ENCODE measurements at regions of chr7 and their contacts with region 1.

Region 1: GRCh38 chr7:133434055-133434865 is 181.4 kb downstream of the EXOC4 start:
- DNase-seq: no peak
- ATAC-seq: 0 out of 2 replicates have a peak, but pooled peaks have one; percentile 28
- H3K4me3 Mint-ChIP-seq: no peak overlapping the region
- H3K27ac Mint-ChIP-seq: no peak overlapping the region
- H3K4me1 Mint-ChIP-seq: peaks cover 32% of the 10 kb centered on the region
- H3K27me3 Mint-ChIP-seq: no peaks in the 10 kb centered on the region
- CTCF ChIP-seq: 0 out of 2 replicates have a peak, but pooled peaks have one; percentile 17

Region 2: GRCh38 chr7:133252858-133253518 is 181.3 kb before region 1 on chr7 and contains the start of gene EXOC4:
- CTCF ChIA-PET with region 1: interaction called, 11 read pairs
- POLR2A ChIA-PET with region 1: no interaction called
- DNase-seq: peak; percentile 87
- ATAC-seq: peak; percentile 100
- H3K4me3 Mint-ChIP-seq: peak within 1 kb of the TSS; percentile 94
- H3K27ac Mint-ChIP-seq: peak within 1 kb of the TSS; percentile 84
- H3K4me1 Mint-ChIP-seq: peaks cover 15% of the 10 kb centered on the region
- H3K27me3 Mint-ChIP-seq: no peaks in the 10 kb centered on the region
- CTCF ChIP-seq: no peak
- total RNA-seq, gene EXOC4: 62.0 to 72.4 TPM (median 66.8 TPM) in 3 replicates

Region 3: DNA sequence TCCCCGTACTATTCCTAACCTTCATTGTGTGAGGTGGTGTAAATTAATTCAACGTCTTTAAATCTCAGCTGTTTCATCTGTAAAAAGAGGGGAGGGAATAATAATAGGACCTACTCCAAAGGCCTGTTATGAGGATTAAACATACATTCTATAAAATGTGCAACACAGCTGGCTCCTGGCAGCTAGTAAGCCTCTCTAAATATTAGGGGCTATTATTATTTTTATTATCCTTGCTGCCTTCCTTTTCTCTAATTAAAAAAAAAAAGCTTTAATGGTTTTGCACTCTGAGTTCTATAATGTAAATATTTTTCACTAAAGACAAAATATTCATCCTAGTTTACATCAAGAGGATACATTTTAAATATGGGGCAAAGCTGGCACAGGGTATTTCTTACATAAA is 161.9 kb before region 1 on chr7:
- CTCF ChIA-PET with region 1: interaction called, 10 read pairs
- POLR2A ChIA-PET with region 1: no interaction called
- DNase-seq: no peak
- ATAC-seq: no peak
- H3K4me3 Mint-ChIP-seq: no peak overlapping the region
- H3K27ac Mint-ChIP-seq: no peak overlapping the region
- H3K4me1 Mint-ChIP-seq: peaks cover 27% of the 10 kb centered on the region
- H3K27me3 Mint-ChIP-seq: no peaks in the 10 kb centered on the region
- CTCF ChIP-seq: no peak

Region 4: DNA sequence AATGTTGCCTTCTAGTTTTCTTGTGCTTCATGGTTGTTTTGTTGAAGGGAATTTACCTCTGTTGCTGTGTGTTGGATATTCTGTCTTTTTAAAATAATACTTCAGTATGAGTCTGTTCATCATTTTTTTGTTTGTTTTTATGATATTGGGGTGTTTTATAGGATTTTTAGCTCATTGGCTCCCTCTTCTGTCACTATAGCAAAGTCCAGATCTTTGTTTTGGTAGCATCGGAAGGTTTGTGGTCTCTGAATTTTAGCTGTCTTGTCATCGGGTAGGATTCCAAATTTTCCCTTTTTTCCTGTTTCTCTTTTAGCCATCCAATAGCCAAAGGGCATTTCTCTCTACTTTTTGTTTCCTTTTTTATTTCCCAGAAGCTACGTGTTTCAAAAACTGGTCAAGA is 90.0 kb before region 1 on chr7:
- CTCF ChIA-PET with region 1: interaction called, 18 read pairs
- POLR2A ChIA-PET with region 1: no interaction called
- DNase-seq: no peak
- ATAC-seq: no peak
- H3K4me3 Mint-ChIP-seq: no peak overlapping the region
- H3K27ac Mint-ChIP-seq: no peak overlapping the region
- H3K4me1 Mint-ChIP-seq: peaks cover 48% of the 10 kb centered on the region
- H3K27me3 Mint-ChIP-seq: no peaks in the 10 kb centered on the region
- CTCF ChIP-seq: no peak

Region 5: GRCh38 chr7:133510326-133511055 is 76.2 kb after region 1 on chr7:
- CTCF ChIA-PET with region 1: no interaction called
- POLR2A ChIA-PET with region 1: no interaction called
- DNase-seq: no peak
- ATAC-seq: no peak
- H3K4me3 Mint-ChIP-seq: no peak overlapping the region
- H3K27ac Mint-ChIP-seq: no peak overlapping the region
- H3K4me1 Mint-ChIP-seq: peaks cover 16% of the 10 kb centered on the region
- H3K27me3 Mint-ChIP-seq: no peaks in the 10 kb centered on the region
- CTCF ChIP-seq: no peak

Measured in WTC11 (cell line).